WTC11 (cell line): ENCODE measurements at regions of chr11 and their contacts with region 1.

Region 1: DNA sequence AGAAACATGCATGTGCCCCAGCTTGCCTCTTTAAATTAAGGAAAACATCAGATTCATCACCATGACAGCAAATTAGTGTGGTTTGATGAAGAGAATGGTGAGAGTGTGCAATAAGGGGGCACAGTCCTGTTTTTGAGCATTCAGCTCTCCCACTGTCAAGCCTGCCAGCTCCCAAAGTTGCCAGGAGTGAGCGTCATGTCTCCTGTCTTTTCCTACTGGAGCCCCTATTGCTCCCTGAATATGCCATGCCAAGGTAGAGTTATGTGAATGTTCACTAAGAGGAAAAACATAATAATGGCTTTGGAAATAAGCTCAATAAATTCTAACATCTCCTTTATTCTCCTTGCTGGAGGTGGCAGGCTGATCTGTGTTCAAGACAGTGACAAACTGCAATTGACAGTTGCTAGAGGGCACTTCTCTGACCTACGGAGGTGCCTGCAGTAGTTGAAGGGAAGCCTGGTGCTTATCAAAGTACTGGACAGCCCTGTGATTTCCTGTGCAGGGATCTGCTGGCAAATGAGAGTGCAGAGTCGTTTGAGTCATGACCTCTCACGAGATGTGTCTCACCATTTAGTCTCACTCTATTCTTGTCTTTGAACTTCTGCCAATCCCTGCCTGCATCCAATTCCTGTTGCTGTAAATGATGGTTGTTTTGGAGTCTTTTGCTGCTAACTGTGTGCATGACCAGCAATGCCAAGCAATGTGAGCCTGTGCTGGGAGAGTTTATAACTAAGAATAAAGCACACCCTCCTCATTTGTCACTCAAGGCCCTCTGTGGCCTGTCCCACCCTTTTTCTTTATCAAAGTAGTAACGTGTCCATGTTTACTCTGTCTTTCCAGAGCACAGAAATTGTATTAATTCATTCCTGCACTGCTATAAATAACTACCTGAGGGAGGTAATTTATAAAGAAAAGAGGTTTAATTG is 34.8 kb downstream of the MRGPRX2 start:
- DNase-seq: no peak
- ATAC-seq: no peak
- H3K4me3 Mint-ChIP-seq: no peak overlapping the region
- H3K27ac Mint-ChIP-seq: no peak overlapping the region
- H3K4me1 Mint-ChIP-seq: no peaks in the 10 kb centered on the region
- H3K27me3 Mint-ChIP-seq: peaks cover 17% of the 10 kb centered on the region
- CTCF ChIP-seq: no peak

Region 2: GRCh38 chr11:19013181-19013857 is 12.4 kb before region 1 on chr11:
- CTCF ChIA-PET with region 1: interaction called, 12 read pairs
- POLR2A ChIA-PET with region 1: no interaction called
- DNase-seq: peak; percentile 46
- ATAC-seq: peak; percentile 58
- H3K4me3 Mint-ChIP-seq: no peak overlapping the region
- H3K27ac Mint-ChIP-seq: no peak overlapping the region
- H3K4me1 Mint-ChIP-seq: no peaks in the 10 kb centered on the region
- H3K27me3 Mint-ChIP-seq: peaks cover 37% of the 10 kb centered on the region
- CTCF ChIP-seq: 0 out of 2 replicates have a peak, but pooled peaks have one; percentile 32